T-cell (primary cell): ENCODE measurements at regions of chr7 and their contacts with region 1.

Region 1: GRCh38 chr7:148962823-148963582 is 65.3 kb downstream of the PDIA4 start:
- DNase-seq: peak in 34 of 35 experiments; percentile 25 to 82 (median 53)
- ATAC-seq: peak; percentile 44 to 64 (median 60)
- H3K4me3 ChIP-seq: peak overlapping the region; percentile 69 to 86
- H3K4me3 Mint-ChIP-seq: peak overlapping the region; percentile 85 to 90 (median 89)
- H3K27ac ChIP-seq: peak overlapping the region; percentile 73
- H3K27ac Mint-ChIP-seq: peak overlapping the region; percentile 90 to 93
- H3K4me1 ChIP-seq: peaks cover 0 to 33% of the 10 kb centered on the region in 2 experiments
- H3K4me1 Mint-ChIP-seq: peaks cover 20 to 27% (median 26%) of the 10 kb centered on the region in 3 donors
- H3K27me3 ChIP-seq: no peaks in the 10 kb centered on the region
- H3K27me3 Mint-ChIP-seq: no peaks in the 10 kb centered on the region

Region 2: GRCh38 chr7:148563583-148564274 is 399.3 kb before region 1 on chr7:
- CTCF ChIA-PET with region 1: interaction called, 4 to 10 read pairs
- POLR2A ChIA-PET with region 1: no interaction called
- DNase-seq: no peak
- ATAC-seq: no peak
- H3K4me3 ChIP-seq: no peak overlapping the region
- H3K4me3 Mint-ChIP-seq: peak overlapping the region; percentile 1 to 50 (median 32)
- H3K27ac ChIP-seq: no peak overlapping the region
- H3K27ac Mint-ChIP-seq: peak overlapping the region; percentile 77 to 91
- H3K4me1 ChIP-seq: peaks cover 0 to 10% of the 10 kb centered on the region in 2 experiments
- H3K4me1 Mint-ChIP-seq: peaks cover 13 to 16% (median 15%) of the 10 kb centered on the region in 3 donors
- H3K27me3 ChIP-seq: no peaks in the 10 kb centered on the region
- H3K27me3 Mint-ChIP-seq: peaks cover under 1 to 18% of the 10 kb centered on the region in 2 donors

Region 3: GRCh38 chr7:148856891-148857290 is 106.1 kb before region 1 on chr7:
- CTCF ChIA-PET with region 1: interaction called, 13 to 18 read pairs
- POLR2A ChIA-PET with region 1: no interaction called
- DNase-seq: peak in 1 of 35 experiments; percentile 15
- ATAC-seq: no peak
- H3K4me3 ChIP-seq: no peak overlapping the region
- H3K4me3 Mint-ChIP-seq: no peak overlapping the region
- H3K27ac ChIP-seq: no peak overlapping the region
- H3K27ac Mint-ChIP-seq: no peak overlapping the region
- H3K4me1 ChIP-seq: peaks cover 0 to 3% of the 10 kb centered on the region in 2 experiments
- H3K4me1 Mint-ChIP-seq: peaks cover 10 to 21% (median 11%) of the 10 kb centered on the region in 3 donors
- H3K27me3 ChIP-seq: no peaks in the 10 kb centered on the region
- H3K27me3 Mint-ChIP-seq: no peaks in the 10 kb centered on the region

Region 4: DNA sequence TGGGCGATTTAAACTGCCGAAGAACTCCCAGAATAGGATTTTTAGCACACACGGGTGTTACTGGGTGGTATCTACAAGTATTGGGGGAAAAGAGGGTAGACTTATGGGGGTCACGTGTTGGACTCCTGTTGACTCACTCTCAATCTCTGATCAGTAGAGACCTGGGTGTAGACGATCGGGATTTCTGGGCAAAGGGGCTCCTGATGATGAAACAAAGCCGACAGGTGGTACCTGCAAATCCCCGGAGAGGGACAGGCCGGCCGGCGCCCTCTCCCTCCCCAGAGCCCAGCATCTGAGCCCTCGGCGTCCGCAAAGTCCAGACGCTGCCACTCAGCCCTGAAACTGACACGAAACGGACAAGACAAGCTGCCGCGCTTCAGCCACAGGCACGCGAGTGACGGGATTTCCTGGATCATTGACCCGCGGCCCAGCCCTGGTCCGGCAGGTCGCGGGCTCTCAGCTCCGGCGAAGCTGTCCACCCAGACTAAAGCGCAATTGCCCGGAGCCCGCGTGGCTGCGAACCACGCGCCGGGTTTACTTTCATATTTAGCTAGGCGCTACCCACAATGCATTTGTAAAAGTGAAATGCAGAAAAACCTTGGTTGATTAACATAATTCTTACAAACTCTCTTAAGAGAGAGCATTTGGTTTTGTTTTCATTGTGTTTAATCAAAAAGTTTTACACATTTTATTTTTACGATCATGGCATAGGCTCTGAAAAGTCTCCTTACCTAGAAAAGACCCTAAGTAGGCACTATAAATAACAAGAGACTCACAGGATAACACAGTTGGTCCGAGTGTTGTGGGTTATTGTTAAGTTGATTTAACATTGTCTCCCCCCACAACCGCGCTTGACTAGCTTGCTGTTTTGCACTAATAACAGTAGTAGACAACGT is 22.1 kb before region 1 on chr7:
- CTCF ChIA-PET with region 1: interaction called, 8 to 22 read pairs
- POLR2A ChIA-PET with region 1: interaction called in 1 of 2 experiments, 6 read pairs
- DNase-seq: peak; percentile 32 to 83 (median 53)
- ATAC-seq: peak; percentile 72 to 83 (median 79)
- H3K4me3 ChIP-seq: peak overlapping the region; percentile 88 to 97
- H3K4me3 Mint-ChIP-seq: peak overlapping the region; percentile 94 to 97 (median 95)
- H3K27ac ChIP-seq: peak overlapping the region; percentile 77
- H3K27ac Mint-ChIP-seq: peak overlapping the region; percentile 97 to 99
- H3K4me1 ChIP-seq: peaks cover 3 to 12% of the 10 kb centered on the region in 2 experiments
- H3K4me1 Mint-ChIP-seq: peaks cover 18 to 21% (median 18%) of the 10 kb centered on the region in 3 donors
- H3K27me3 ChIP-seq: no peaks in the 10 kb centered on the region
- H3K27me3 Mint-ChIP-seq: no peaks in the 10 kb centered on the region

Region 5: DNA sequence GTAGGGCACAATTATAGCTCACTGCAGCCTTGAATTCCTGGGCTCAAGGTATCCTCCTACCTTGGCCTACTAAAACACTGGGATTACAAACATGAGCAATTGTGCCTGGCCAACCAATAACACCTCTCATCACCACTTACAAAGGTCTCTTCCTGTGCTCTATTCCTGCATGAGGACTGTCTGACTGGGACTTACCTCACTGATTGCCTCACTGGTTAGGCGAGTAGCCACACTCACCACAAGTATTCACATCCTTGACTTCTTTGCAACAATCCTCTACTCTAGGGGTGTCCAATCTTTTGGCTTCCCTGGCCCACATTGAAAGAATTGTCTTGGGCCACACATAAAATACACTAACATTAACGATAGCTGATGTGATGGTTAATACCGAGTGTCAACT is 87.9 kb after region 1 on chr7:
- CTCF ChIA-PET with region 1: interaction called in 1 of 2 experiments, 3 read pairs
- POLR2A ChIA-PET with region 1: interaction called in 1 of 2 experiments, 15 read pairs
- DNase-seq: no peak
- ATAC-seq: no peak
- H3K4me3 ChIP-seq: no peak overlapping the region
- H3K4me3 Mint-ChIP-seq: no peak overlapping the region
- H3K27ac ChIP-seq: no peak overlapping the region
- H3K27ac Mint-ChIP-seq: no peak overlapping the region
- H3K4me1 ChIP-seq: no peaks in the 10 kb centered on the region
- H3K4me1 Mint-ChIP-seq: no peaks in the 10 kb centered on the region
- H3K27me3 ChIP-seq: peaks cover 0 to 4% of the 10 kb centered on the region in 2 experiments
- H3K27me3 Mint-ChIP-seq: peaks cover 0 to 4% of the 10 kb centered on the region in 2 donors

Region 6: GRCh38 chr7:149188637-149189259 is 225.7 kb after region 1 on chr7:
- CTCF ChIA-PET with region 1: no interaction called
- POLR2A ChIA-PET with region 1: no interaction called
- DNase-seq: no peak
- ATAC-seq: no peak
- H3K4me3 ChIP-seq: no peak overlapping the region
- H3K4me3 Mint-ChIP-seq: no peak overlapping the region
- H3K27ac ChIP-seq: no peak overlapping the region
- H3K27ac Mint-ChIP-seq: no peak overlapping the region
- H3K4me1 ChIP-seq: no peaks in the 10 kb centered on the region
- H3K4me1 Mint-ChIP-seq: peaks cover 0 to 11% (median 3%) of the 10 kb centered on the region in 3 donors
- H3K27me3 ChIP-seq: peaks cover 0 to under 1% of the 10 kb centered on the region in 2 experiments
- H3K27me3 Mint-ChIP-seq: no peaks in the 10 kb centered on the region